ENCODE measurements at regions of chr4 and their contacts with region 1.

Region 1: GRCh38 chr4:55321707-55322264 is 24.3 kb upstream of the SRD5A3 start:
- DNase-seq: peak in 7 of 10 donors; percentile 37 to 90 (median 70)
- H3K4me3 ChIP-seq: no peak overlapping the region
- H3K27ac ChIP-seq: no peak overlapping the region
- H3K27me3 ChIP-seq: no peaks in the 10 kb centered on the region
- CTCF ChIP-seq: peak; percentile 55 to 97 (median 82)

Region 2: DNA sequence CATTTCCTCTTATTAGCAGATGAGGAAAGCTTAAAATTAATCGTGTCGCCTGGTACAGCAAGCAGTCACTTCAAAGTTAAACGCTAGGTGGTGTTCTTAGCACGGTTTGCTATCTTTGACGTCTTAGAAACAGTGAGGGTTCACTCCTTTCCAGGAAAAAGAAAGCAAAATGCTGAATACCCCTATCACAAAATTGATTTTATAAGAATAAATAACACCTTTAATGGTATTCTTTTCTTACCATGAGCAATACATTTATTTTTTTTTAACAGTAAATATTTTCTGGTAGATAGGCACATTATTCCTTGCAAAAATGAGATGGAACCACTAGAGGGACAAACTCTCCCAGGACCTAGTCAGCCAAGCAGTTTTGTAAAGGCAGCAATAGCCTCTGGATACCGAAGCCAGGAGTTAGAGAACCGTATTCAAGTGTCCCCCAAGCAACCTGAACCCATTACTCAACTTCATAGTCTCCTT is 350.3 kb before region 1 on chr4:
- intact Hi-C with region 1: loop called in 1 of 2 experiments (anchors 5 kb)
- DNase-seq: no peak
- H3K4me3 ChIP-seq: peak overlapping the region in 9 of 59 donors; percentile 6 to 33 (median 17)
- H3K27ac ChIP-seq: no peak overlapping the region
- H3K27me3 ChIP-seq: peaks cover 0 to 9% (median 0%) of the 10 kb centered on the region in 45 donors
- CTCF ChIP-seq: peak; percentile 62 to 93 (median 78)

Region 3: DNA sequence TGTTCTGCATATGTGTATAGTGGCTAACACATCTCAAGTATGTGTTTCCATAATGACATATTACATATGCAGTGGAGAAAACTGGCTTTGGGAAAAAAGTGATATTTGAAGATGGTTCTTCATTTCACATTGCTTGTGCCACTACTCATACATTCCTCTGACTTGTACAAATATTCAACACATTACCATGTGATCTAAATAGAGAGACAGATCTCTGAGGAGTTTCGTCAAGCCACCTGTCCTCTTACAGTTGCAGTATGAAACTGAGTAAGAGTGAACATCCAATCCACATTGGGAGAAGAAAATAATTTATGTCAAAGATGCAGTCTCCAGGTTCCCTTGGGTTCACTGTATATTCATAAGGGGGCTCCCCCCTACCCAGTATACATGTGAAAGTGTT is 320.2 kb before region 1 on chr4:
- intact Hi-C with region 1: loop called (anchors 2 to 5 kb)
- DNase-seq: no peak
- H3K4me3 ChIP-seq: no peak overlapping the region
- H3K27ac ChIP-seq: no peak overlapping the region
- H3K27me3 ChIP-seq: peaks cover 0 to 8% (median 0%) of the 10 kb centered on the region in 45 donors
- CTCF ChIP-seq: no peak

Region 4: DNA sequence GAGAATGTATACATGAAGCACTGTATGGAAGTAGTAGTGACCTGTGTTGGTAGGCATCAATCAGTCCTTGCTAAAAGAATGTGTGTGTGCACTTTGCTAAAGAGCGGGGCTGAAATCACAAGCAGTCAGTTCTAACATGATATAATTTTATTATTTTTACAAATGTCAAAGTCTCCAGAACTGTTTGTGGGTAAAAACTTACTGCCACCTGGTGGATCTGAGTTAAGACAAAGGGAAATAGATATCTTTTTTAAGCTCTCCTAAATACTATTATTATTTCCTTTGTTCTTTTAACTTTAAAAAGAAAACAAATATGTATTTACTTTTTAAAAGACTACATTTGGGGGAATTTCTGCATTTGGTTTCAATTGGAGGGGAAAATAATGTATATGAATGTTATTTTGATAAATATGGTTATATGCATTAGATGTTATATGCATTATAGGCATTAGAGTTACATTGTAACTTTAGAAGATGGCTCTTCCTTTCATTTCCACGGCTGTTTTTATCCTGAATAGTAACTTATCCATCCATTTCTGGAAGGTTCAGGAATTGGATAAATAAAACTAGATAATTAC is 232.8 kb after region 1 on chr4:
- intact Hi-C with region 1: no loop called
- DNase-seq: no peak
- H3K4me3 ChIP-seq: no peak overlapping the region
- H3K27ac ChIP-seq: no peak overlapping the region
- H3K27me3 ChIP-seq: no peaks in the 10 kb centered on the region
- CTCF ChIP-seq: peak; percentile 11 to 68 (median 48)